CD4-positive, alpha-beta memory T cell (primary cell): ENCODE measurements at regions of chr1 and their contacts with region 1.

Region 1: DNA sequence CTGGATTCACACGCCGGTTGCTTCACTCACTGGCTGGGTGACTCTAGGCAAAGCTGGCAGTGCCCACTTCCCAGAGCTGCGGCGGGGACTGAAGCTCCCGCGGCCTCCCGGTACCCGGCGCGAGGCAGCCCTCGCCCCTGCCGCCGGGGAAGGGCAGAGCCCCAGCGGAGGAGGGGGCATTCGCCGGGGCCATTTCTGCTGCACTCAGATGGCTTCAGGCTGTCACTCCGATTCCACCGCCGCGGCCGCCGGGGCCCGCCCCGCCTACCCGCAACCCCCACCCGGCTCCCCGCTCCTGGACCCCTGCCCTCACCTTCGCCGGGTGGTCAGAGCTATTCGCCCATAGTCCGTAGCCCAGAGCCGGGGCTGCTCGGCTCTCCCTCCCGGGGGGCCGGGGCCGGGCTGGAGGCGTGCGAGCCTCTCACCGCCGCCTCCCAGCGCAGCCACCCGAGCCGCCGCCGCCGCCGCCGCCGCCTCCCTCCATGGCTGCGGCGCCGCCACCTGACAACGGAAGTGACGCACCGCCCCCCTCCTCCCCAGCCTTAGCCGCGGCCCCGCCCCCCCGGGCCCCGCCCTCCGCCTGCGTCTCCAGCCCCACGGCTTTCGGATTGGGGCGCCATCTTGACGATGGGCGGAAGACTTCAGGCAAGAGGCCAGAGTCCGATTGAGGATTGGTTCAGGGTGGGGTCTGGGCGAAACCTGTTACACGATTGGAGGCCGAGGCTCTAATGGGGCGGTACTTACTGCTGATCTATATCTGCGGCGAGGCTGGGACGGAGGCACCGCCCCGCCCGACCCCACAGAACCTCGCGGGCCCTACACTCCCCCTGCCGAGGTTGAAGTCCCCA is at the start of gene STK40:
- DNase-seq: peak; percentile 95 to 99 (median 98)
- H3K4me3 ChIP-seq: peak within 1 kb of the TSS; percentile 88 to 94
- H3K4me3 Mint-ChIP-seq: peak within 1 kb of the TSS; percentile 91 to 96 (median 94)
- H3K27ac ChIP-seq: peak within 1 kb of the TSS; percentile 87
- H3K27ac Mint-ChIP-seq: peak within 1 kb of the TSS; percentile 97 to 100 (median 99)
- H3K4me1 ChIP-seq: peaks cover 57% of the 10 kb centered on the region
- H3K4me1 Mint-ChIP-seq: peaks cover 35 to 62% (median 47%) of the 10 kb centered on the region in 4 donors
- H3K27me3 ChIP-seq: no peaks in the 10 kb centered on the region
- H3K27me3 Mint-ChIP-seq: no peaks in the 10 kb centered on the region
- total RNA-seq, gene STK40: 52.2 to 57.4 TPM

Region 2: DNA sequence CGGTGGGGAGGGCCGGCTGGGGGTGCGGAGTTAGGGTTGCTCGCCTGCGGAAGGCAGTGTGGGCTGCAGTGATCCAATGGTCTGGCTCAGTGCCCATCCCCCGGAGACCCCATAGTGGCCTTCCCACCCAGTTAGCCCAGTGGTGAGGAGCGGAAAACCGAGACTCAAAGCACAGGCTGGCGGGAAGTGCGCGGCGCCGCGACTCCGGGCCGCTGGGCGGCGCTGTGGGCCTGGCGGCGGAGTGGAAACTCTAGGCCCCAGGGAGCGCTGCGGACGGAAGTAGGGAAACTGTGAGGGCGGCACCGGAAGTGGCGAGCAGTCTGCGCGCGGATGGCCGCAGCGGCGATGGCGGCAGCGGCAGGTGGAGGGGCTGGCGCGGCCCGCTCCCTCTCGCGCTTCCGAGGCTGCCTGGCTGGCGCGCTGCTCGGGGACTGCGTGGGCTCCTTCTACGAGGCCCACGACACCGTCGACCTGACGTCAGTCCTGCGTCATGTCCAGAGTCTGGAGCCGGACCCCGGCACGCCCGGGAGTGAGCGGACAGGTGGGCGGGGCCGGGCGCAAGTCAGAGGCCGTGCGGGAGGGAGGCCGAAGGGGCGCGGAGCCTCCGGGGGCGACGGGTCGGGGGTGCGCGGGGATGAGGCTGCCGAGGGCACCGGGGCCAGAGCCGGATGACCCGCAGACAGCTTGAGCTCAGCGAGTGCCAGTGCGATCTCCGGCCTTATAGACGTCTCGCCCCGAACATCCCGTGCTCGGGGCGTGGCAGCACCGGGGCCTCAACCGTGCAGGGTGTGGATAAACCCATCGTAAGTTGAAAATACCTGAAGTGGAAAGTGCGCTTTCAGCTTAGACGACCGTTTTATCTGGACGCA is 296.8 kb before region 1 on chr1 and contains the start of gene ADPRS:
- CTCF ChIA-PET with region 1: no interaction called
- POLR2A ChIA-PET with region 1: no interaction called
- intact Hi-C with region 1: loop called (anchors 5 kb)
- DNase-seq: peak; percentile 88 to 91 (median 89)
- H3K4me3 ChIP-seq: peak within 1 kb of the TSS; percentile 29 to 87
- H3K4me3 Mint-ChIP-seq: peak within 1 kb of the TSS; percentile 87 to 98 (median 92)
- H3K27ac ChIP-seq: peak within 1 kb of the TSS; percentile 92
- H3K27ac Mint-ChIP-seq: peak within 1 kb of the TSS; percentile 88 to 99 (median 96)
- H3K4me1 ChIP-seq: peaks cover 18% of the 10 kb centered on the region
- H3K4me1 Mint-ChIP-seq: peaks cover 11 to 38% (median 15%) of the 10 kb centered on the region in 4 donors
- H3K27me3 ChIP-seq: no peaks in the 10 kb centered on the region
- H3K27me3 Mint-ChIP-seq: peaks cover 6 to 14% of the 10 kb centered on the region in 2 donors
- total RNA-seq, gene ADPRS: 26.7 to 28.6 TPM

Region 3: DNA sequence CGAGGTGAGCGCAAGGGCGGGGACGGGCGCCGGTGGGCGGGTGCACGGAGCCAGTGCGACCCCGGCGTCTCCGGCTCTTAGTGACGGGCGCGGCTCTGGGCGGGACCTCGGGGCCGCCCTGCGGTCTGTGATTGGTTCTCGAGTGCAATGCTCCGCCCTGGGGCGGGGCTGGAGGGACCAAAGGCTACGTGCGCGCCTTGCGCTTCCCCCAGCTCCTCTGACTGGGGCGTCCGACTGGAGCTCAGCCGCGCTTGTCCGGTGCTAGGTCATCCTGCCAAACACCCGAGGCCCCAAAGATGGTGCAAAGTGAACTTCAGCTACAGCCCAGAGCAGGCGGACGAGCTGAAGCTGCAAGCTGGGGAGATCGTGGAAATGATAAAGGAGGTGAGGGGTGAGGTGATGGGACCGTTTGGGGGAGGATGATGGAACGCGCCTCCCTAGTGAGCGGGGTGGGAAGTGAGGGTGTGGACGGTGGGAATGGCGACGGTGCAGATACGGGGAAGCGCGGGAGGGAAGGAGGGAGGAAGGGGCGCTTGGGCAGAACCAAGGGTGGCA is 78.7 kb before region 1 on chr1:
- CTCF ChIA-PET with region 1: interaction called, 4 read pairs
- POLR2A ChIA-PET with region 1: interaction called, 11 read pairs
- intact Hi-C with region 1: loop called (anchors 1 kb)
- DNase-seq: peak; percentile 90 to 94 (median 92)
- H3K4me3 ChIP-seq: peak overlapping the region; percentile 77 to 81
- H3K4me3 Mint-ChIP-seq: peak overlapping the region; percentile 91 to 99 (median 94)
- H3K27ac ChIP-seq: peak overlapping the region; percentile 73
- H3K27ac Mint-ChIP-seq: peak overlapping the region; percentile 74 to 96 (median 92)
- H3K4me1 ChIP-seq: peaks cover 23% of the 10 kb centered on the region
- H3K4me1 Mint-ChIP-seq: peaks cover 5 to 21% (median 11%) of the 10 kb centered on the region in 4 donors
- H3K27me3 ChIP-seq: no peaks in the 10 kb centered on the region
- H3K27me3 Mint-ChIP-seq: no peaks in the 10 kb centered on the region

Region 4: DNA sequence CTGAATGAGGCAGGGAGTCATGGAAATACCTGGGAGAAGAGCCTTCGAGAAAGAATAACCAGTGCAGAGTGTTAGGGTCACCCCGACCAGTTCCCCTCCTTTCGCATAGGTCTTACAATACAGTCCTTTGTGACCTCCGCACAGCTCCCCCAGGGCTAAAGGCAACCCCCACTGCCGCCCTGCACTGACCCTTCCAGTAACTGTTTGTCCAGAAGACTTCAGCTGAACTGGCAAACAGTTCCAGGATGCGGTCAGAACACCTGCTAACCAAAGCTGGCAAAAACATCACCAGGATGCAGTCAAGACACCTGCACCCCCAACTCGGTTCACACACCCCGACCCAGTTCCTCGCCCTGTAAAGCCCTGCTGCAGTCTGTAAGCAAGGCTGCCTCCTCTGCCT is 55.8 kb before region 1 on chr1:
- CTCF ChIA-PET with region 1: no interaction called
- POLR2A ChIA-PET with region 1: no interaction called
- intact Hi-C with region 1: no loop called
- DNase-seq: no peak
- H3K4me3 ChIP-seq: no peak overlapping the region
- H3K4me3 Mint-ChIP-seq: no peak overlapping the region
- H3K27ac ChIP-seq: no peak overlapping the region
- H3K27ac Mint-ChIP-seq: peak overlapping the region in 1 of 7 donors; percentile 40
- H3K4me1 ChIP-seq: no peaks in the 10 kb centered on the region
- H3K4me1 Mint-ChIP-seq: peaks cover 3 to 9% (median 7%) of the 10 kb centered on the region in 4 donors
- H3K27me3 ChIP-seq: no peaks in the 10 kb centered on the region
- H3K27me3 Mint-ChIP-seq: no peaks in the 10 kb centered on the region

Region 5: DNA sequence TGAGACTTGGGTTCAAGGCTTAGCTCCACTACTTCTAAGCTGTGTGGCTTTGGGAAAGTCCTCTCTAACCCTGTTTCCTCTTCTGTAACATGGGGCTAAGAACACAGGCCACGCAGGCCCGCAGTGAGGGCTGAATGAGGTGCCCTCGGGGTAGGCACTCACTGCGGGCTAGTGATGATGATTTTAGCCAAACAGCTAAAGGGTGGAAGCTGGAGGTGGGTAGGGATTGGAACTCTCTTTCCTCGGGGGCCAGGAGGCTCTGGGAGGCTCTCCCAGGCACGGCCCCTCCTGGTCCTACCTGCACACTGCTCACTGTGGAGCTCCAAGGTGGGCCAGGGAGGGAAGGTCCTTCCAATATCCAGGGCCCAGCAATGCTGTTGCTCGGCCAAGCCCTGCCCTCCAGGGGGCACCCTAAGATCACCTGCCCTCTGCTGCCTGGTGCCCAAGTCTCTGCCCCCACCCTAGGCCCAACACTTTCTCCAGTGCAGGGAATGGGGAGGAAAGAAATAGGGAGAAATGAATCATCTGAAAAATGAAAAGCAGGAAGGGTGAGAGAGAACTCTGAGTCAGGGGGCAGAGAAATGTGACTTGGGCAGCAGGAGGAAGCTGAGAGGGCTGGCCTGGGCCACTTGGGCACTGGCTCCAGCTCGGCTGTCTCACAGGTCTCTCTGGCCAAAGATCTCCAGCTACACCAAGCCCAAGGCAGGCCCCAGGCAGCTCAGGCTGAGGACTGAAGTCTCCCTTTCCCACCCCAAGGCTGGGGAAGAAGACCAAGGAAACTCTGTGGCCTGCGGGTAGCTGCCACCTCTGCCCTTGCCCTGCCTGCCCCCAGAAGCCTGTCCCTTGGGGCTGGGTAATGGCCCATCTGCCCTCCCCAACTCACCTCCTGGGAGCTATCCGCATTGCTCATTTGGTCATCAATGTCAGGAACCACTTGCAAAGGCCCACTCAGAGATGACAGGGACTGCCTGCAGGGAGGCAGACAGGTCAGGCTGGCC is 42.9 kb before region 1 on chr1:
- CTCF ChIA-PET with region 1: interaction called, 31 read pairs
- POLR2A ChIA-PET with region 1: interaction called, 6 read pairs
- intact Hi-C with region 1: no loop called
- DNase-seq: peak in 4 of 5 donors; percentile 53 to 65 (median 58)
- H3K4me3 ChIP-seq: no peak overlapping the region
- H3K4me3 Mint-ChIP-seq: peak overlapping the region in 1 of 8 donors; percentile 35
- H3K27ac ChIP-seq: no peak overlapping the region
- H3K27ac Mint-ChIP-seq: peak overlapping the region in 5 of 7 donors; percentile 33 to 78 (median 43)
- H3K4me1 ChIP-seq: peaks cover 16% of the 10 kb centered on the region
- H3K4me1 Mint-ChIP-seq: peaks cover 6 to 51% (median 19%) of the 10 kb centered on the region in 4 donors
- H3K27me3 ChIP-seq: no peaks in the 10 kb centered on the region
- H3K27me3 Mint-ChIP-seq: no peaks in the 10 kb centered on the region

Region 6: GRCh38 chr1:36369061-36369861 is 16.4 kb before region 1 on chr1:
- CTCF ChIA-PET with region 1: interaction called, 61 read pairs
- POLR2A ChIA-PET with region 1: interaction called, 133 read pairs
- intact Hi-C with region 1: loop called (anchors 1 kb)
- DNase-seq: peak; percentile 76 to 80 (median 79)
- H3K4me3 ChIP-seq: no peak overlapping the region
- H3K4me3 Mint-ChIP-seq: peak overlapping the region in 6 of 8 donors; percentile 11 to 72 (median 28)
- H3K27ac ChIP-seq: peak overlapping the region; percentile 24
- H3K27ac Mint-ChIP-seq: peak overlapping the region; percentile 57 to 89 (median 82)
- H3K4me1 ChIP-seq: peaks cover 72% of the 10 kb centered on the region
- H3K4me1 Mint-ChIP-seq: peaks cover 46 to 75% (median 64%) of the 10 kb centered on the region in 4 donors
- H3K27me3 ChIP-seq: no peaks in the 10 kb centered on the region
- H3K27me3 Mint-ChIP-seq: no peaks in the 10 kb centered on the region

Region 7: DNA sequence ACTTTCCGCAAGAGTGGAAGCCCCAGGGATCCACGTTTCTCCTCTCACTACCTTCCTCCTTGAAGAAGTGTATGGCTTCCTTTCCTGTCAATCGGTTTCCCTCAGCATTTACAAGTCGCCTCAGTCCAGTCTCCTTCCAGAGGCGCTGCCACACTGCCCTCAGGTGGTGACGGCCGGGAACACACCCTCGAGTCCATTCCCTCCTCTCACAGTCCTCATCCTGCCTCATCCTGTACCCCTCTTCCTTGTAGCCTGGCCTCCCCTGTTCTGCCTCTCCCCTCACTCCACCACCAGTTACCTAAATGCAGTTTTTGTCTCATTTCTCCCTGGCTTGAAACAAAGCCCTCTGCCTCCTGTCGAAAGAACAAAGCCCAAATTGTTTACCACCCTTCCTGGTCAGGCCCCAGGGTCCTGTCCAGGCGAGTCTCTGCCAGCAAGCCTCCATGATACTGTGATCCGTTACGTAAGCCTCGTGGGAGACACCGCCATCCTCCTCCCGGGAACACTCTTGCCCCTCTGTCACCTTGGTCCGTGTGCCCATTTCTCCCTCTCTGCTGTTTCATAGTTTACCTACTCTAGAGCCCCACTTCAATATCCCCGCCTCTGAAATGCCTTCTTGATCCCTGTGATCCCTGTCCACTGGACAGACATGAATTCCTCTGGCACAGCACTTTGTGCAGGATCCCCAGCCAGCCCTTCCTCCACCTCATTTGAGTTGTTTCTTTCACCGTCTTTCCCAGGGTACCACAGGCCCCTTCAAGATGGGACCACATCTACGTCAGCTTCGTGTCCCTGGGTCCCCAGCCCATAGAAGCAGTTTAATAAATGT is 35.4 kb after region 1 on chr1:
- CTCF ChIA-PET with region 1: interaction called, 4 read pairs
- POLR2A ChIA-PET with region 1: interaction called, 5 read pairs
- intact Hi-C with region 1: loop called (anchors 1 kb)
- DNase-seq: peak; percentile 83 to 88 (median 86)
- H3K4me3 ChIP-seq: no peak overlapping the region
- H3K4me3 Mint-ChIP-seq: peak overlapping the region; percentile 49 to 84 (median 74)
- H3K27ac ChIP-seq: peak overlapping the region; percentile 30
- H3K27ac Mint-ChIP-seq: peak overlapping the region; percentile 82 to 97 (median 94)
- H3K4me1 ChIP-seq: peaks cover 21% of the 10 kb centered on the region
- H3K4me1 Mint-ChIP-seq: peaks cover 19 to 29% (median 22%) of the 10 kb centered on the region in 4 donors
- H3K27me3 ChIP-seq: no peaks in the 10 kb centered on the region
- H3K27me3 Mint-ChIP-seq: no peaks in the 10 kb centered on the region

Region 8: DNA sequence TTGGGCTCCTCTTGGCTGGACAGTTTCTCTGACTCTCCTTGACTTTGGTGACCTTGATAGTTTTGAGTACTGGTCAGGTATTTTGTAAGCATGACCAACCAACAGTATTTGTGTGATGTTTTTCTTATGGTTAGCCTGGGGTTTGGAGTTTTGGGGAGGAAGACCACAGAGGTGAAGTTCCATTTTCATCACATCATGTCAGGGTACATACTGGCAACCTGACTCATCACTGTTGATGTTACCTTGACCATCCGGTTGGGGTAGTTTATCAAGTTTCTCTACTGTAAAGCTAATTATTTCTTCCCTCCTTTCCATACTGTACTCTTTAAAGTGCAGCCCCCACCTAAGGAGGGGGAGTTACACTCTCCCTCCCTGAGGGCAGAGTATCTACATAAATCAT is 51.2 kb after region 1 on chr1:
- CTCF ChIA-PET with region 1: no interaction called
- POLR2A ChIA-PET with region 1: no interaction called
- intact Hi-C with region 1: no loop called
- DNase-seq: no peak
- H3K4me3 ChIP-seq: no peak overlapping the region
- H3K4me3 Mint-ChIP-seq: no peak overlapping the region
- H3K27ac ChIP-seq: no peak overlapping the region
- H3K27ac Mint-ChIP-seq: no peak overlapping the region
- H3K4me1 ChIP-seq: no peaks in the 10 kb centered on the region
- H3K4me1 Mint-ChIP-seq: no peaks in the 10 kb centered on the region
- H3K27me3 ChIP-seq: no peaks in the 10 kb centered on the region
- H3K27me3 Mint-ChIP-seq: no peaks in the 10 kb centered on the region